Activated naive CD4-positive, alpha-beta T cell treated with anti-CD3 and anti-CD28 coated beads for 36 hours (primary cell): ENCODE measurements at regions of chr6 and their contacts with region 1.

Region 1: DNA sequence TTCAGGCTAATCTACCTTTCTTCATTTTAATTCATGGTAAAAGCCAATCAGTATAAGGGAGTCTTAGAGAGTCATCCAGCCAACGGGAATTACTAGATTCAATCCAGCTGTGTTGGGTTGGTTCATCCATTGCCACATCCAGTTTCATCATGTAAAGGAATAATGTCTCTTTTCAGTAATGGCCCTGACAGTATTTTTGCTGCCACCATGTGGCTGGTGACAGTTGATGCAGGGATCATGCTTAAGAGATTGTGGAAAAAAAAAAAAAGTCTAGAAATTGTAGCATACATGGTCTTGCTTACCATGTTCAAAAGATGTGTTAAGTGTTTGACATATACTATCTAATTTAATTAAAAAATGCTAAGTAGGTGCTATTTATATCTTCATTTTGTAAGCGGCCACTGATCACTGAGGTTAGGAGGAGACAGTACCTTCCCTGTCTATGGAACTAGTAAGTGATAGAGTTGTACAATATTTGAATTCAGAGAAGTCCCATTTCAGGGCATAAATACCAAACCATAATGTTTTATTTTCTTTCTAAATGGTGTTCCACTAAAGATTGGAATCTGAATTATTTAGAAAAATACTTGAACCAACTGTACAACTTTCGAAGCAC is 135.9 kb downstream of the KHDRBS2 start:
- DNase-seq: peak; percentile 11
- H3K4me3 Mint-ChIP-seq: no peak overlapping the region
- H3K27ac Mint-ChIP-seq: no peak overlapping the region
- H3K4me1 Mint-ChIP-seq: no peaks in the 10 kb centered on the region
- H3K27me3 Mint-ChIP-seq: no peaks in the 10 kb centered on the region

Region 2: GRCh38 chr6:61809004-61809595 is 341.1 kb before region 1 on chr6:
- CTCF ChIA-PET with region 1: interaction called, 5 read pairs
- intact Hi-C with region 1: loop called (anchors 5 kb)
- DNase-seq: no peak
- H3K4me3 Mint-ChIP-seq: no peak overlapping the region
- H3K27ac Mint-ChIP-seq: no peak overlapping the region
- H3K4me1 Mint-ChIP-seq: no peaks in the 10 kb centered on the region
- H3K27me3 Mint-ChIP-seq: no peaks in the 10 kb centered on the region